Ascending aorta (tissue), 2 donors: ENCODE measurements at regions of chr6 and their contacts with region 1.

Region 1: GRCh38 chr6:152124429-152125074 is 317.1 kb downstream of the ESR1 start:
- DNase-seq: no peak
- H3K4me3 ChIP-seq: no peak overlapping the region
- H3K27ac ChIP-seq: no peak overlapping the region
- H3K4me1 ChIP-seq: peaks cover 0 to 7% of the 10 kb centered on the region in 2 donors
- H3K27me3 ChIP-seq: no peaks in the 10 kb centered on the region
- CTCF ChIP-seq: peak; percentile 70 to 75 (median 73)

Region 2: DNA sequence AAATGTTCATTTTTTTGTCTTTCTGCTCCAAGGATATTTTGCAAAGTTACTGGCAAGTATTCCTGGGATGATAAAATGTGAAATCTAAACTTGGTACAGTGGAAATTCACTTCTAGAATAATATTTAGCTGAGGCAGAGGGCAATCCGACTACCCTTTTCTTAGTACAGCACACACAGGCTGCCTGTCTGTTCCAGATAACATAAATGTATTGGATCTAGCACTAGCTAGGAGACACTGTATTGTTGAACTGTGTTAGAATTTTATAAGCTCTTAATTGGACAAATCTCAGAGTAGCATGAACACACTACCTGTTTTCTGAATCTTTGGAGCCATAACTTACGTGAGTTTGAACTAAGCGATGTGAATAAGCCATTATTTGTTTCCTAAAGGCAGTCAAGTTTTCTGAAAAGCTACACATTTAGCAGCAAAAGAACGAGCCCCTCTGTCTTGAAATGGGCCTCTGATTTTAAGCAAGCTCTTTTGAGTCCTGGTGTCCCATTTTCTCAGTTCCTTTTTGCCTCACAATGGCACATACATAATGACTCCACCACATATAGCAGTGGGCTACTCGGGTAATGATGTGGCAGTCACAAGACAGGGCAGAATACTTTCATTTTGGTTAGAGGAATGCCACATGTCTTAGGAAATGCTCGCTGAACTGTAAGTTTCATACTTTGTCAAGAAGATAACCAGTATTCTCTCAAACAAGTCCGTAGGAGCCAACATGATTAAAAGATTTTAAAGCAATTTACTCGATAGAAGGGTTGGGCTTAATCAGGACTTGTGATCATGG is 433.6 kb before region 1 on chr6:
- intact Hi-C with region 1: loop called (anchors 5 kb)
- DNase-seq: no peak
- H3K4me3 ChIP-seq: peak overlapping the region; percentile 31 to 49
- H3K27ac ChIP-seq: peak overlapping the region; percentile 63 to 71
- H3K4me1 ChIP-seq: no peaks in the 10 kb centered on the region
- H3K27me3 ChIP-seq: no peaks in the 10 kb centered on the region
- CTCF ChIP-seq: no peak

Region 3: GRCh38 chr6:152089992-152090391 is 34.6 kb before region 1 on chr6:
- intact Hi-C with region 1: loop called (anchors 5 kb)
- DNase-seq: peak in 1 of 2 donors; percentile 80
- H3K4me3 ChIP-seq: no peak overlapping the region
- H3K27ac ChIP-seq: peak overlapping the region in 1 of 2 donors; percentile 27
- H3K4me1 ChIP-seq: peaks cover 2 to 18% of the 10 kb centered on the region in 2 donors
- H3K27me3 ChIP-seq: no peaks in the 10 kb centered on the region
- CTCF ChIP-seq: no peak

Region 4: DNA sequence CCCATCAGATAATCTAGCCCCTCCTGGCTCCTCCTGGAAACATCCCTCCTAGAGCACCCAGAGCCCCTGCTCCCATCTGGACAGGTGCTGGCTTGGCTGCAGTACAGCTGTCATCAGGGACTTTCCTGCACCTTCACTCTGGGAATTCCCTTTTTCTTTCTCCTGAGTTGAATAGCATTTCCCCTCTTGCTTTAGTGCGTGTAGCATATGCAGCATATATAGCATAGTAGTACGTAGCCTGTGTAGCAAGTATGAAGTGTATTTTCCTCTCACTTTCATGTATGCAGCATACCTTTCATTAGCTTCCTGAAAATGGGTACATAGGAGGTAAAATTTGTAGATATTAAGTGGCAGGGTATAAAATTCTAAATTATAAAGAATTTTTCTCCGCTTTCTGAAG is 35.8 kb after region 1 on chr6:
- intact Hi-C with region 1: no loop called
- DNase-seq: no peak
- H3K4me3 ChIP-seq: no peak overlapping the region
- H3K27ac ChIP-seq: no peak overlapping the region
- H3K4me1 ChIP-seq: no peaks in the 10 kb centered on the region
- H3K27me3 ChIP-seq: no peaks in the 10 kb centered on the region
- CTCF ChIP-seq: no peak

Region 5: GRCh38 chr6:152318278-152318677 is 193.7 kb after region 1 on chr6:
- intact Hi-C with region 1: no loop called
- DNase-seq: no peak
- H3K4me3 ChIP-seq: no peak overlapping the region
- H3K27ac ChIP-seq: peak overlapping the region; percentile 75 to 86
- H3K4me1 ChIP-seq: peaks cover 0 to 31% of the 10 kb centered on the region in 2 donors
- H3K27me3 ChIP-seq: no peaks in the 10 kb centered on the region
- CTCF ChIP-seq: no peak

Region 6: DNA sequence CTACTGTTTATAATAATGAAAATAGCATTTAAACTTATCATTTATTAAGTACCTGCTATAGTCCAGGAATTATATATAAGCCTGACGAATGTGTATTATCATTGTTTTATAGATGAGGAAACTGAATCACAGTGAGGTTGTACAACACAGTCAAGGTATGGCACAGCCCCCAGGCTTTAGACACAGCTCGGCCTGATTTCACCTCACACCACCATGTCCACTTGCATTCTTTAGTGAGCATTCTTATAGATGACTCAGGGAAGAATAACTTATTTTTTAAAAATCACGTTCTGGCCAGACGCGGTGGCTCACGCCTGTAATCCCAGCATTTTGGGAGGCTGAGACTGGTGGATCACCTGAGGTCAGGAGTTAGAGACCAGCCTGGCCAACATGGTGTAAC is 223.6 kb after region 1 on chr6:
- intact Hi-C with region 1: no loop called
- DNase-seq: no peak
- H3K4me3 ChIP-seq: no peak overlapping the region
- H3K27ac ChIP-seq: no peak overlapping the region
- H3K4me1 ChIP-seq: no peaks in the 10 kb centered on the region
- H3K27me3 ChIP-seq: no peaks in the 10 kb centered on the region
- CTCF ChIP-seq: no peak